ENCODE measurements at regions of chr12 and their contacts with region 1.

Region 1: DNA sequence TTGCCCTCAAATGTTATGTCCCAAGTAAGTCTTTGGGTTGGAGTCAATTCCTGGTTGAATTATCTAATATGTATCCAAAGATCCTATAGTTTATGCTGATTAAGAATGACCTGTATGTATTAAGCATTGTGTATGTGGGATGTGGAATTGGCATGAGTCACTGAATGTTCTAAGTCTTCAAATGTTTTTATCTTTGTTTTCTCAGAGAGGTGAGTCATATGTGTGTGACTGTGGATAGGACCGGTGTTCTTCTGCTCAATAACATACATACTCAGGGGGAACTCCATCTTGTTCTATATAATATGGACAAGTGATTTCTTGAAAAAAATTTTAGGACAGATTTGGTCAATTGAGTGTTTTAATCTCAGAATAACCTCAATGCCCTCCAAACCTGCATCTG is 57.9 kb downstream of the NAV3 start:
- DNase-seq: peak; percentile 97
- H3K4me3 ChIP-seq: no peak overlapping the region
- H3K27ac ChIP-seq: peak overlapping the region; percentile 39
- H3K4me1 ChIP-seq: peaks cover 15% of the 10 kb centered on the region
- H3K27me3 ChIP-seq: no peaks in the 10 kb centered on the region
- CTCF ChIP-seq: no peak
- POLR2A ChIP-seq: no peak

Region 2: GRCh38 chr12:77751939-77752338 is 136.7 kb before region 1 on chr12:
- CTCF ChIA-PET with region 1: no interaction called
- POLR2A ChIA-PET with region 1: no interaction called
- dilution Hi-C with region 1: no loop called
- intact Hi-C with region 1: loop called (anchors 1 kb)
- DNase-seq: peak; percentile 82
- H3K4me3 ChIP-seq: peak overlapping the region in 1 of 3 experiments; percentile 8
- H3K27ac ChIP-seq: peak overlapping the region; percentile 37
- H3K4me1 ChIP-seq: peaks cover 15% of the 10 kb centered on the region
- H3K27me3 ChIP-seq: no peaks in the 10 kb centered on the region
- CTCF ChIP-seq: no peak
- POLR2A ChIP-seq: no peak